ENCODE measurements at regions of chr1 and their contacts with region 1.

Region 1: GRCh38 chr1:54406339-54407153 is at the start of gene SSBP3:
- DNase-seq: peak; percentile 89
- H3K4me3 Mint-ChIP-seq: peak within 1 kb of the TSS; percentile 83
- H3K27ac Mint-ChIP-seq: peak within 1 kb of the TSS; percentile 93
- H3K4me1 Mint-ChIP-seq: peaks cover 61% of the 10 kb centered on the region
- H3K27me3 Mint-ChIP-seq: no peaks in the 10 kb centered on the region
- total RNA-seq, gene SSBP3: 55.0 to 58.3 TPM

Region 2: GRCh38 chr1:53837924-53838652 is 568.5 kb before region 1 on chr1 and contains the start of gene NDC1:
- CTCF ChIA-PET with region 1: no interaction called
- intact Hi-C with region 1: loop called (anchors 2 kb)
- DNase-seq: peak; percentile 92
- H3K4me3 Mint-ChIP-seq: peak within 1 kb of the TSS; percentile 100
- H3K27ac Mint-ChIP-seq: peak within 1 kb of the TSS; percentile 96
- H3K4me1 Mint-ChIP-seq: peaks cover 27% of the 10 kb centered on the region
- H3K27me3 Mint-ChIP-seq: no peaks in the 10 kb centered on the region
- total RNA-seq, gene NDC1: 25.9 to 27.9 TPM

Region 3: DNA sequence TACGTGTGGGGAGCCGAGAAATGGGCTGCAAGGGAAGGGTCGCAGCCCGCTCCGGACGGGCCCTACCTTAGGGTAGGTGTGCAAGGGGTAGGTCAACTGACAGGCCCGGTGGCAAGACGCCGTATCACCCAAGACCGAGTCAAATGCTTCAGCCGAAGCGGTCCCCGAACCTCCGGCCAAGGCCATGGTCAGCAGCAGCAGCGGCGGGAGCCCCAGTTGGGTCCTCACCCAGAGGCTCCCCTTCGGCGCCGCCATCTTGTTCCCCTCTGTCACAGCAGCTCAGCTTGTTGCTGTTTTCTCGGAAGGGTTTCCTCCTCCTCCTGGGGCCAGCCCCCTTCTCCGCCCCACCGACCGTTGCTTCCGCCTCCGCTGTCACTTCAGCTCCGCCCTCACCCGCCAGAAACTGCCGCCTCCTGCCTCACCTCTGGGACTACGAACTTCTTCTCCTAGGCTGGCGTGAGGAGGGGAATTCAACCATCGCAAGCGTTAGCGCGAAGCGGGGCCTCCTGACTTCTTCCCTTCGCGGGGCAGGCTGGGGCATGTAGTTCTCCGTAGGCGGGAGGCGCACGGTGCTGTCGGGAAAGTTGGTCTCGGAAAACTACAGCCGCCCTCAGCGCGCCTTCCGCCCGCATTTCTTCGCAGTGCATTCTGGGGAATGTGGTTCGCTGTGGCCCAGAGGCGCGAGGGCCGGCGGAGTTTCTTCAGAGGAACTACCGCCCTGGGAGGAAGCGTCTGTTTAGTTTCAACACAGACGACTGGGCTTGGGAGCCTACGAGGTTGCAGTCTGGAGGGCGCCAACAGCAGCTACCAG is 353.4 kb before region 1 on chr1 and contains the starts of genes TCEANC2 and TMEM59:
- CTCF ChIA-PET with region 1: no interaction called
- intact Hi-C with region 1: loop called (anchors 1 kb)
- DNase-seq: peak; percentile 99
- H3K4me3 Mint-ChIP-seq: no peak within 1 kb of the TSS
- H3K27ac Mint-ChIP-seq: no peak within 1 kb of the TSS
- H3K4me1 Mint-ChIP-seq: peaks cover 37% of the 10 kb centered on the region
- H3K27me3 Mint-ChIP-seq: no peaks in the 10 kb centered on the region
- total RNA-seq, gene TCEANC2: 13.0 TPM
- total RNA-seq, gene TMEM59: 140 to 142 TPM

Region 4: DNA sequence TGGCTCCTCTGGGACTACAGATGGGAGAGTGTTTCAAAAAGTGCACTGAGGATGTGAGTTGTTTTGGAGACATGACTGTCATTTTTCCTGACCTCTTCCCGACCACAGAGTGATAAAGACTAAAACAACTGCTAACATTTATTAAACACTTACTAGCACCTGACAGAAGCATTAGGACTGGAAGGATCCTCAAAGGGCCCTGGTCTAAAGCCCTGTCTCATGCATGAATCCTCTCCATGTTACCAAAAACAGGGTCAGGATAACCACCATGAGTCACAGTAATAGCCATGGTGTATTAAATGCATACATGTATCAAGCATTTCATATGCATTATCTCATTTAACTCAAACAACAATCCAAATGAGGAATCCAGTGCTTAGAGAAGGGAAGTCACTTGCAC is 218.3 kb before region 1 on chr1:
- CTCF ChIA-PET with region 1: no interaction called
- intact Hi-C with region 1: no loop called
- DNase-seq: no peak
- H3K4me3 Mint-ChIP-seq: no peak overlapping the region
- H3K27ac Mint-ChIP-seq: no peak overlapping the region
- H3K4me1 Mint-ChIP-seq: no peaks in the 10 kb centered on the region
- H3K27me3 Mint-ChIP-seq: no peaks in the 10 kb centered on the region

Region 5: GRCh38 chr1:54355931-54356679 is 50.4 kb before region 1 on chr1:
- CTCF ChIA-PET with region 1: interaction called, 7 read pairs
- intact Hi-C with region 1: loop called (anchors 1 kb)
- DNase-seq: peak; percentile 56
- H3K4me3 Mint-ChIP-seq: peak overlapping the region; percentile 80
- H3K27ac Mint-ChIP-seq: peak overlapping the region; percentile 88
- H3K4me1 Mint-ChIP-seq: peaks cover 91% of the 10 kb centered on the region
- H3K27me3 Mint-ChIP-seq: no peaks in the 10 kb centered on the region

Region 6: GRCh38 chr1:54459726-54460191 is 53.2 kb after region 1 on chr1:
- CTCF ChIA-PET with region 1: no interaction called
- intact Hi-C with region 1: loop called (anchors 2 kb)
- DNase-seq: peak; percentile 36
- H3K4me3 Mint-ChIP-seq: no peak overlapping the region
- H3K27ac Mint-ChIP-seq: no peak overlapping the region
- H3K4me1 Mint-ChIP-seq: peaks cover 45% of the 10 kb centered on the region
- H3K27me3 Mint-ChIP-seq: no peaks in the 10 kb centered on the region

Region 7: DNA sequence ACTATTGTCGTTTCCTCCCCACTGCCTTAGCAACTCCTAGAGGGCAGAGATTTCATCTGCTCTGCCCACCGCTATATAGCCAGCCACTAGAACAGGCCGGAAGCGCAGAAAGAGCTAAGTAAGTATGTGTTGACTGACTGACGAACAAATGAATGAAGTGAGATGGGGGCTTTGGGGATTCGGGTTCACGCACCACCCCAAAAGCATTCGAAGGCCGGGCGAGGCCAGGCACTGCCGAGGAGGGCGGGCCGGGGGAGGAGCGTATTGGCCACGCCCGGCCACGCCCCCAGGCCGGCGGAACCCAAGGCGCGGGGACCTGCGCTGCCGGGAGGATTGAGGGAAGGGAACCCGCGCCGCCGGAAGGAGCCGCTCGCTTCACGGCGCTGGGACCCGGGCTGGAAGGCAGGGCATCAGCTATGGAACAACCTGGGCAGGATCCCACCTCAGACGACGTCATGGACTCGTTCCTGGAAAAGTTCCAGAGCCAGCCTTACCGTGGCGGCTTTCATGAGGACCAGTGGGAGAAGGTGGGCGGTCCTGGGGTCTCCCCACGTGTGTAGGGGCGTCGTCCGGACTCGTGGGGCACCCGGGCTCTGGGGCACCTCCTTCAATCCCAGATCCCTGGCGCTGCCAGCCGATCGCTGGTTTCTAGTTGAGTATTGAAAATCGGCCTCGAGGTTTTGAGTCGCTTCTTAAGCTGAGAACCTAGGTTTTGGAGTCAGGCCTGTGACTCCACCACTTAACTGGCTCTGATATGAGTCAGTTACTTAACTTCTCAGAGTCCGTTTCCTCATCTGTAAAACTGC is 309.1 kb after region 1 on chr1 and contains the start of gene TTC4:
- CTCF ChIA-PET with region 1: no interaction called
- intact Hi-C with region 1: loop called (anchors 5 kb)
- DNase-seq: peak; percentile 84
- H3K4me3 Mint-ChIP-seq: peak within 1 kb of the TSS; percentile 92
- H3K27ac Mint-ChIP-seq: peak within 1 kb of the TSS; percentile 92
- H3K4me1 Mint-ChIP-seq: peaks cover 31% of the 10 kb centered on the region
- H3K27me3 Mint-ChIP-seq: no peaks in the 10 kb centered on the region
- total RNA-seq, gene TTC4: 26.3 to 30.2 TPM

Measured in activated naive CD4-positive, alpha-beta T cell treated with anti-CD3 and anti-CD28 coated beads for 36 hours (primary cell).